ENCODE measurements at regions of chr15 and their contacts with region 1.

Region 1: DNA sequence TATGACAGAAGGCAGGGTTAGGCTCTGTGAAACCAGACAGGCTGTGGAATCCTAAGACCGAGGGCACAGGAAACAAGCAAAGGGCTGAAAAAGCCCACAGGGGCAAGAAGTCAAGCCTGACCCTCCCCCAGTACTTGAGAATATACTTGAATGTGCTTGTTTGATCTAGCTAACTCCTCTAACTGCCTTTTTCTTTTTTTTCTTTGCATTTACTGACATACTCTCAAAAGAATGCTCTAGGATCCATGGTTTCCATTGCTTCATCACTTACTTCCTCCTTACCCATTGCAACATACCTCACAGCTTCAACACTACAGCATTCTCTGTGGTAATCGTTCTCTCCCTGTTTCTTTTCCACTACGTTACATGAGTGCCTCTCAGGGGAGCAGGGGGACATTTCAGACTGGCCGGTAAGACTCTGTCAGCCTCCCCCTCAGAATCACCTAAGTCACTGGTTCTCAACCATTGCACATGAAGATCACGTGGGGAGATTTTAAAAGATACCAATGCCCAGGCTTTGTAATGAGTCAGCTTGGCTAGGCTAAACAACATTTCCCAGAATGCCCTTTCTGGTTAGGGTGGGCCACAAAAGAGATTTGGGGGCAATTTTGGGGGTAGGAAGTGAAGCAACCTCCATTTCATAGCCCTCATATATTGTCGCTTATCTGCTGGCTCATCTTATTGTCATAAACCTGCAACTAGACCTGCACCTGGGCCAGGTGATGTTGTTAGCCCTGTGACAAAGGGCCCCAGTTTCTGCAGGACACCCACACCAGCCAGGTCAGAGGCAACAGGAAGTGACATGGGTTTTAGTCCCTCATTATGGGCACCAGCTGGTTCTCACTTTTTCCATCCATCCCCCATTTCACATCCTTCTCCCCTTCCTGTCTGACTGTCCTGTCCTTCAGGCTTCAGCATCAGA is 24.6 kb upstream of the RSL24D1 start:
- DNase-seq: peak; percentile 11
- H3K4me3 ChIP-seq: no peak overlapping the region
- H3K27ac ChIP-seq: no peak overlapping the region
- H3K4me1 ChIP-seq: no peaks in the 10 kb centered on the region
- H3K27me3 ChIP-seq: no peaks in the 10 kb centered on the region
- CTCF ChIP-seq: no peak

Region 2: DNA sequence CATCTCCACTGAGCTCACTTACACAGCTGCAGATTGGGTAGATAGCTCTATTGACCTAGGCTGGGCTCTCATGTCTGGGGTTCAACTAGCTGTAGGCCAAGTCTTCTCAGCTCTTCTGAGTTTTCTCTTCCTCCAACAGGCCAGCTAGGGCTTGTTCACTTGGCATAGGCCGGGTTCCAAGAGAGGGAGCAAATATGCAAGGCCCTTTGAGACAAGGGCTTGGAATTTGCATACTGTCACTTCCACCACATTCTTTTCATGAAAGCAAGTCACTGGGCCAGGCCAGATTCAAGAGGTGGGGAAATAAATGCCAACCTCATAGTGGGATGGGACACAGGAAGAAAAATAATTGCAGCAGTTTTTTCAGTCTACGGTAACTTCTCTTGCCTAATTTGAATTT is 122.9 kb after region 1 on chr15:
- CTCF ChIA-PET with region 1: no interaction called
- POLR2A ChIA-PET with region 1: no interaction called
- intact Hi-C with region 1: no loop called
- DNase-seq: peak; percentile 18
- H3K4me3 ChIP-seq: no peak overlapping the region
- H3K27ac ChIP-seq: no peak overlapping the region
- H3K4me1 ChIP-seq: peaks cover 21% of the 10 kb centered on the region
- H3K27me3 ChIP-seq: no peaks in the 10 kb centered on the region
- CTCF ChIP-seq: no peak

Region 3: DNA sequence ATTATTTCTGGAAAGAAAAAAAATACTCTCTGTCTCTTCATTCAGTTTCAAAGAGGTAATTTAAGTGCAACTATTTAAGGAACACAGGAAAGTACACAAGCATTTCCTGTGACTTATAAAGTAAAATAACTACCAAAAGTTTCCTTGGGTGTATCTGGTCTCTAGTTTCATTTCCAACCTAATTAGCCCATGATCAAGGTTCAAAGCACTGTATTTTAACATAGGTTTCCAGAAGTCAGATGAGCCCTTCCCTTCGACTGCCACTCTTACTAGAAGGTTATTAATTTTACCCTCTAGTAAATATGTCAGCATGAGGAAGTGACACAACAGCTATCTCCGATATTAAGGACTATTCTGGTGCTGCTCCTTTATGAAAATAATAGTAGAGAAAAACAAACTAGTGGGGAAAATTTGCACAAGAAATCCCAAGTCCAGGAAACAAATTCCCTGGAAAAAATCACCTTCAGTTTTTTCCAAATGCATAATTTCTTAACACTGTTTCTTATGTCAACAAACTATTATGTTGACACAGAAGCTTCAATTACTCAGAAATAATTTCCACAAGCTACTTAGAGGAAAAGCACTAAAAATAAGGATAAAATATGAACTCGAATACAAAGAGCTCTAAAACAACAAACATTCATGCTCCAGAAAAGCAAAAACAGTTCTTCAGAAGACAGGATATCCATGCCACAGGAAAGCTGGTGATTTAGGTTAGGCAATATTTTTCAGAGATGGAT is 151.5 kb after region 1 on chr15:
- CTCF ChIA-PET with region 1: no interaction called
- POLR2A ChIA-PET with region 1: no interaction called
- intact Hi-C with region 1: no loop called
- DNase-seq: no peak
- H3K4me3 ChIP-seq: no peak overlapping the region
- H3K27ac ChIP-seq: no peak overlapping the region
- H3K4me1 ChIP-seq: no peaks in the 10 kb centered on the region
- H3K27me3 ChIP-seq: no peaks in the 10 kb centered on the region
- CTCF ChIP-seq: no peak

Region 4: GRCh38 chr15:55434989-55435825 is 213.9 kb after region 1 on chr15:
- CTCF ChIA-PET with region 1: interaction called, 4 read pairs
- POLR2A ChIA-PET with region 1: no interaction called
- intact Hi-C with region 1: loop called (anchors 1 kb)
- DNase-seq: peak; percentile 65
- H3K4me3 ChIP-seq: no peak overlapping the region
- H3K27ac ChIP-seq: no peak overlapping the region
- H3K4me1 ChIP-seq: no peaks in the 10 kb centered on the region
- H3K27me3 ChIP-seq: no peaks in the 10 kb centered on the region
- CTCF ChIP-seq: peak; percentile 69

Measured in A673 (cell line).